WTC11 (cell line): ENCODE measurements at regions of chr10 and their contacts with region 1.

Region 1: GRCh38 chr10:103486336-103487160 is 7.0 kb upstream of the NEURL1 start:
- DNase-seq: no peak
- ATAC-seq: no peak
- H3K4me3 Mint-ChIP-seq: no peak overlapping the region
- H3K27ac Mint-ChIP-seq: no peak overlapping the region
- H3K4me1 Mint-ChIP-seq: no peaks in the 10 kb centered on the region
- H3K27me3 Mint-ChIP-seq: peaks cover 4% of the 10 kb centered on the region
- CTCF ChIP-seq: no peak

Region 2: DNA sequence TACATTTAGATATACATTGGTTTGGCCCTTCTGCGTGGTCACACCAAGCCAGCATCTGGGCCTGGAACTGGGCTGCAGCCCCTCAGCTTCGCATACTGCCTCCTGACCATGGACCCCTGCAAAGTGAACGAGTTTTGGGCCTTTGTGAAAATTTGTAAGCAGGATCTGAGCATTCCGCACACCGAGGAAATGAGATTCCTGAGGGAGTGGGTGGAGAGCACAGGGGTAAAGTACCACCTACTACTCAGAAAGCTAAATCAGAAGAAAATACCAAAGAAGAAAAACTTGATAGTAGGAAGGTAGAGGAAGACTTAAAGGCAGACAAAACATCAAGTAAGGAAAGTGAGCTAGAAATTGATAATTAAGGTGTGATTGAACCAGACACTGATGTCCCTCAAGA is 270.9 kb before region 1 on chr10:
- CTCF ChIA-PET with region 1: no interaction called
- POLR2A ChIA-PET with region 1: no interaction called
- DNase-seq: no peak
- ATAC-seq: no peak
- H3K4me3 Mint-ChIP-seq: no peak overlapping the region
- H3K27ac Mint-ChIP-seq: peak overlapping the region; percentile 68
- H3K4me1 Mint-ChIP-seq: peaks cover 58% of the 10 kb centered on the region
- H3K27me3 Mint-ChIP-seq: no peaks in the 10 kb centered on the region
- CTCF ChIP-seq: no peak

Region 3: DNA sequence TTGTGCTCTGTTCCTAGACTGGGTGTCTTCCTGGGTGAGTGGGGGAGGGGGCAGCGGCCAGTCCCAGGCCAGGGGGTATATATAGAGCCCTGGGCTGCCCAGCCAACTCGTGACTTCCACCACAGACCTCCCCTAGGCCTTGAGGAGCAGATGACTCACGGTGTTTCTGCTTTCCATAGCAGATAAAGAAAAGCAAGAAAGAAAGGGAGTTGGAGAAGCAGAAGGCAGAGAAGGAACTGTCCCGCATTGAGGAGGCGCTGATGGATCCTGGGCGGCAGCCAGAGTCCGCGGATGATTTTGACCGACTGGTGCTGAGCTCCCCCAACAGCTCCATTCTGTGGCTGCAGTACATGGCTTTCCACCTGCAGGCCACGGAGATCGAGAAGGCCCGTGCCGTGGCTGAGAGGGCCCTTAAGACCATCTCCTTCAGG is 44.5 kb before region 1 on chr10:
- CTCF ChIA-PET with region 1: interaction called, 11 read pairs
- POLR2A ChIA-PET with region 1: no interaction called
- DNase-seq: no peak
- ATAC-seq: no peak
- H3K4me3 Mint-ChIP-seq: no peak overlapping the region
- H3K27ac Mint-ChIP-seq: no peak overlapping the region
- H3K4me1 Mint-ChIP-seq: no peaks in the 10 kb centered on the region
- H3K27me3 Mint-ChIP-seq: no peaks in the 10 kb centered on the region
- CTCF ChIP-seq: no peak

Region 4: DNA sequence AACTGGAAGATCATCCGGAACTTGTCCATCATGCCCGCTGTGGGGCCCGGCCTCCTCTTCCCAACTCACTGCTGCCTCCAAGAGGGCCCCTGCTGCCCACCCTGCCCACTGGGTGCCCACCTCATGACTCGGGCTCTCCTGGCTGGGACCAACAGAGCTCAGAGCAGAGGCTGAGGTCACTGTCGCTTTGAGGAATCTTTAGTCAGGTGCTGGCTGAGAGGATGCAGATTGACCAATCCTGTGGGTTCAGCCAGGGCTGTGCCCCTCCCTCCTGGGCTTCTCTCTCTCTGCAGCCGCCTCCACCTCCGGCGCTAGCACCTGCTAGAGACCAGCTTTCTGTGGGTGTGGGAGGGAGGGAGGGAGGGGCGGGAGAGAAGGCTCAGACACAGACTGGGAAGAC is 27.8 kb before region 1 on chr10 and contains the start of gene CALHM1:
- CTCF ChIA-PET with region 1: interaction called, 12 read pairs
- POLR2A ChIA-PET with region 1: no interaction called
- DNase-seq: peak; percentile 65
- ATAC-seq: peak; percentile 93
- H3K4me3 Mint-ChIP-seq: no peak within 1 kb of the TSS
- H3K27ac Mint-ChIP-seq: no peak within 1 kb of the TSS
- H3K4me1 Mint-ChIP-seq: peaks cover 3% of the 10 kb centered on the region; the same call in 1 of the 2 replicates
- H3K27me3 Mint-ChIP-seq: no peaks in the 10 kb centered on the region
- CTCF ChIP-seq: no peak
- total RNA-seq, gene CALHM1: 0.30 to 0.55 TPM (median 0.39 TPM) in 3 replicates

Region 5: GRCh38 chr10:103476046-103476995 is 10.2 kb before region 1 on chr10:
- CTCF ChIA-PET with region 1: interaction called, 29 read pairs
- POLR2A ChIA-PET with region 1: interaction called, 3 read pairs
- DNase-seq: peak; percentile 73
- ATAC-seq: peak; percentile 93
- H3K4me3 Mint-ChIP-seq: no peak overlapping the region
- H3K27ac Mint-ChIP-seq: no peak overlapping the region
- H3K4me1 Mint-ChIP-seq: peaks cover 13% of the 10 kb centered on the region
- H3K27me3 Mint-ChIP-seq: no peaks in the 10 kb centered on the region
- CTCF ChIP-seq: 0 out of 2 replicates have a peak, but pooled peaks have one; percentile 27

Region 6: GRCh38 chr10:103542764-103543616 is 56.4 kb after region 1 on chr10:
- CTCF ChIA-PET with region 1: interaction called, 13 read pairs
- POLR2A ChIA-PET with region 1: no interaction called
- DNase-seq: peak; percentile 45
- ATAC-seq: peak; percentile 89
- H3K4me3 Mint-ChIP-seq: peak overlapping the region; percentile 59
- H3K27ac Mint-ChIP-seq: peak overlapping the region; percentile 7
- H3K4me1 Mint-ChIP-seq: peaks cover 16% of the 10 kb centered on the region
- H3K27me3 Mint-ChIP-seq: peaks cover 3% of the 10 kb centered on the region; the same call in 1 of the 2 replicates
- CTCF ChIP-seq: no peak

Region 7: GRCh38 chr10:103592186-103593021 is 105.9 kb after region 1 on chr10:
- CTCF ChIA-PET with region 1: interaction called, 17 read pairs
- POLR2A ChIA-PET with region 1: no interaction called
- DNase-seq: peak; percentile 79
- ATAC-seq: peak; percentile 92
- H3K4me3 Mint-ChIP-seq: no peak overlapping the region
- H3K27ac Mint-ChIP-seq: no peak overlapping the region
- H3K4me1 Mint-ChIP-seq: peaks cover 5% of the 10 kb centered on the region
- H3K27me3 Mint-ChIP-seq: peaks cover 4% of the 10 kb centered on the region; the same call in 1 of the 2 replicates
- CTCF ChIP-seq: peak; percentile 77